Dendritic cell treated with granulocyte-macrophage colony-stimulating factor and Interleukin-4, amounts not matched to agents 40 ng/mL and 50 ng/mL, for 4 days (primary cell): ENCODE measurements at regions of chr11 and their contacts with region 1.

Region 1: GRCh38 chr11:69048718-69049489 is at the start of gene TPCN2:
- H3K4me3 Mint-ChIP-seq: peak within 1 kb of the TSS; percentile 76
- H3K27ac Mint-ChIP-seq: peak within 1 kb of the TSS; percentile 90
- H3K4me1 Mint-ChIP-seq: peaks cover 71% of the 10 kb centered on the region
- H3K27me3 Mint-ChIP-seq: no peaks in the 10 kb centered on the region

Region 2: GRCh38 chr11:68839054-68839865 is 209.6 kb before region 1 on chr11:
- intact Hi-C with region 1: no loop called
- H3K4me3 Mint-ChIP-seq: peak overlapping the region; percentile 64
- H3K27ac Mint-ChIP-seq: peak overlapping the region; percentile 82
- H3K4me1 Mint-ChIP-seq: peaks cover 66% of the 10 kb centered on the region
- H3K27me3 Mint-ChIP-seq: peaks cover 4% of the 10 kb centered on the region

Region 3: GRCh38 chr11:68927280-68928135 is 121.4 kb before region 1 on chr11:
- intact Hi-C with region 1: loop called (anchors 5 kb)
- H3K4me3 Mint-ChIP-seq: peak overlapping the region; percentile 60
- H3K27ac Mint-ChIP-seq: peak overlapping the region; percentile 92
- H3K4me1 Mint-ChIP-seq: peaks cover 42% of the 10 kb centered on the region
- H3K27me3 Mint-ChIP-seq: no peaks in the 10 kb centered on the region

Region 4: GRCh38 chr11:68942751-68943271 is 106.1 kb before region 1 on chr11:
- intact Hi-C with region 1: loop called (anchors 5 kb)
- H3K4me3 Mint-ChIP-seq: no peak overlapping the region
- H3K27ac Mint-ChIP-seq: peak overlapping the region; percentile 81
- H3K4me1 Mint-ChIP-seq: peaks cover 76% of the 10 kb centered on the region
- H3K27me3 Mint-ChIP-seq: peaks cover 4% of the 10 kb centered on the region

Region 5: GRCh38 chr11:69080257-69080995 is 31.5 kb after region 1 on chr11:
- intact Hi-C with region 1: loop called (anchors 5 kb)
- H3K4me3 Mint-ChIP-seq: peak overlapping the region; percentile 48
- H3K27ac Mint-ChIP-seq: peak overlapping the region; percentile 94
- H3K4me1 Mint-ChIP-seq: peaks cover 48% of the 10 kb centered on the region
- H3K27me3 Mint-ChIP-seq: no peaks in the 10 kb centered on the region

Region 6: GRCh38 chr11:69155302-69156234 is 106.7 kb after region 1 on chr11 and contains the start of gene SMIM38:
- intact Hi-C with region 1: no loop called
- H3K4me3 Mint-ChIP-seq: no peak within 1 kb of the TSS
- H3K27ac Mint-ChIP-seq: no peak within 1 kb of the TSS
- H3K4me1 Mint-ChIP-seq: no peaks in the 10 kb centered on the region
- H3K27me3 Mint-ChIP-seq: peaks cover 48% of the 10 kb centered on the region

Region 7: GRCh38 chr11:69200331-69201065 is 151.6 kb after region 1 on chr11:
- intact Hi-C with region 1: no loop called
- H3K4me3 Mint-ChIP-seq: no peak overlapping the region
- H3K27ac Mint-ChIP-seq: no peak overlapping the region
- H3K4me1 Mint-ChIP-seq: no peaks in the 10 kb centered on the region
- H3K27me3 Mint-ChIP-seq: peaks cover 12% of the 10 kb centered on the region